Tibial artery (tissue), 4 donors: ENCODE measurements at regions of chr4 and their contacts with region 1.

Region 1: GRCh38 chr4:47145630-47146029 is 114.3 kb downstream of the GABRB1 start:
- DNase-seq: no peak
- H3K4me3 ChIP-seq: no peak overlapping the region
- H3K27ac ChIP-seq: no peak overlapping the region
- H3K4me1 ChIP-seq: no peaks in the 10 kb centered on the region
- H3K27me3 ChIP-seq: no peaks in the 10 kb centered on the region
- CTCF ChIP-seq: no peak

Region 2: GRCh38 chr4:45865781-45866180 is 1279.8 kb before region 1 on chr4:
- intact Hi-C with region 1: loop called (anchors 5 kb)
- DNase-seq: no peak
- H3K4me3 ChIP-seq: no peak overlapping the region
- H3K27ac ChIP-seq: no peak overlapping the region
- H3K4me1 ChIP-seq: no peaks in the 10 kb centered on the region
- H3K27me3 ChIP-seq: no peaks in the 10 kb centered on the region
- CTCF ChIP-seq: no peak

Region 3: DNA sequence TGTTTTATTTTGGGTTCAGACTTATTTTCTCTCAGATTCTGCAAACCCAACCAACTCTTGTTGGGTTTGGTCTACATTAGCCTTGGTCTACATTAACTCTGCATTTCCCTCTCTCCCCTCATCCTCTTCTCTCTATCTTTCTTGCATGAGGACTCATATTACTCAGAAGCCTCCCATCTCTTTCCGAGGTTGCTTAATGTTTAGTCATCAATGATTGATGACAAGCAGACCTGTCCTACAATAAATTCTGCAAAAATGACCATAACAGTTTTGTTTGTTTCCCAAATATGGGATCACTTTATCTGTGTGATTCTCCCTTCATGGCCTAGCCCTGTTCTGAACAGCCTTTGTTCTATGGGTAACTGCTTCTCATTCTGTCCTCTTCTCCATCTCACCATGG is 39.1 kb before region 1 on chr4:
- intact Hi-C with region 1: no loop called
- DNase-seq: no peak
- H3K4me3 ChIP-seq: no peak overlapping the region
- H3K27ac ChIP-seq: no peak overlapping the region
- H3K4me1 ChIP-seq: no peaks in the 10 kb centered on the region
- H3K27me3 ChIP-seq: no peaks in the 10 kb centered on the region
- CTCF ChIP-seq: no peak